ENCODE measurements at regions of chr16 and their contacts with region 1.

Region 1: GRCh38 chr16:370443-370842 is at the start of gene MRPL28:
- H3K4me3 ChIP-seq: peak within 1 kb of the TSS; percentile 47
- H3K27ac ChIP-seq: peak within 1 kb of the TSS; percentile 64; the same call in 1 of the 2 replicates
- H3K4me1 ChIP-seq: peaks cover 3% of the 10 kb centered on the region
- CTCF ChIP-seq: no peak

Region 2: GRCh38 chr16:381789-382717 is 11.6 kb after region 1 on chr16 and contains the start of gene PGAP6:
- CTCF ChIA-PET with region 1: interaction called, 3 read pairs
- POLR2A ChIA-PET with region 1: interaction called, 10 read pairs
- H3K4me3 ChIP-seq: peak within 1 kb of the TSS; percentile 67
- H3K27ac ChIP-seq: peak within 1 kb of the TSS; percentile 77; the same call in 1 of the 2 replicates
- H3K4me1 ChIP-seq: no peaks in the 10 kb centered on the region
- CTCF ChIP-seq: no peak